ENCODE measurements at regions of chr16 and their contacts with region 1.

Region 1: GRCh38 chr16:75110637-75111513 is 5.7 kb downstream of the LDHD start:
- DNase-seq: peak; percentile 70 to 91 (median 78)
- ATAC-seq: peak; percentile 74
- H3K4me3 ChIP-seq: peak overlapping the region; percentile 20
- H3K4me3 Mint-ChIP-seq: peak overlapping the region; percentile 44
- H3K27ac ChIP-seq: peak overlapping the region in 1 of 2 donors; percentile 62
- H3K27ac Mint-ChIP-seq: peak overlapping the region; percentile 82
- H3K4me1 ChIP-seq: peaks cover 59% of the 10 kb centered on the region
- H3K4me1 Mint-ChIP-seq: peaks cover 55% of the 10 kb centered on the region
- H3K27me3 ChIP-seq: peaks cover 4 to 9% of the 10 kb centered on the region in 2 experiments
- H3K27me3 Mint-ChIP-seq: peaks cover 11% of the 10 kb centered on the region
- CTCF ChIP-seq: peak; percentile 91

Region 2: DNA sequence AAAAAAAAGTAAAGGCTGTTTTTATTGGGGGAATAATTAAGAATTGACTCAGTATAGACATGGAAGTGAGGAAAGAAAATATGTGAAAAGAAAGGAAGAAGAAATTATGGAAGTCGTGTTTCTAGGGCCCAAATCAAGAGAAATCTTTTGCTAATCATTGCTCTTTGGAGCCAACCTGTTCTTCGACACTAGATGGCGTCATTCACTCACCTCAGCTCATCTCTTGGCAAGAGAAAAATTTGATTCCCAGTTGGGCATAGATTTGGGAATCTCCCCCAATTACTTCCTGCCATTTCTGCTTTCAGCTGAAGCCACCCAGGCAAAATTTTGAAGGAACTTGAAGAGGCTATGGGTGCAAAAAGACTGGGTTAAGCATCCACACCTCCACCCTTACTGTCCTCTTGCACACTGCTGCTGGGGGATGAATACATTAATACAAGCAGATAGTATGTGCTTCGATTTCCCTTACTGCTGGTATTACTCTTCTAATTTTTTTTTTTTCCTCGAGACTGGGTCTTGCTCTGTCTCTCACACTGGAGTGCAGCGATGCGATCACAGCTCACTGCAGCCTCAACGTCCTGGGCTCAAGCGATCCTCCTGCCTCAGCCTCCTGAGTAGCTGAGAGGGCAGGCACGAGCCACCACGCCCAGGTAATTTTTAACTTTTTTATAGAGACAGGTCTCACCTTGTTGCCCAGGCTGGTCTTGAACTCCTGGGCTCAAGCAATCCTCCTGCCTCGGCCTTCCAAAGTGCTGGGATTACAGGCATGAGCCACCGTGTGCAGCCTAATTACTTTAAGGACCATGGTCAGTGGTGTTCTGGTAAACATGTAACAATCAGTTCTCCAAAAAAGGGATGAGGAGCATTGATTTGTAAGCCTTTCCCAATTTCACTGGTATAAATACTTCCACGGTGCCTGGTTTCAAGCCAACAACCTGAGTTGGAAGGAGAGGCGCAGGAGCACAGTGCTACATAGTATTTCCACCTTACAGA is 800.8 kb before region 1 on chr16:
- CTCF ChIA-PET with region 1: no interaction called
- POLR2A ChIA-PET with region 1: no interaction called
- intact Hi-C with region 1: no loop called
- DNase-seq: peak in 4 of 14 experiments; percentile 29 to 67 (median 46)
- ATAC-seq: no peak
- H3K4me3 ChIP-seq: no peak overlapping the region
- H3K4me3 Mint-ChIP-seq: no peak overlapping the region
- H3K27ac ChIP-seq: no peak overlapping the region
- H3K27ac Mint-ChIP-seq: no peak overlapping the region
- H3K4me1 ChIP-seq: no peaks in the 10 kb centered on the region
- H3K4me1 Mint-ChIP-seq: no peaks in the 10 kb centered on the region
- H3K27me3 ChIP-seq: no peaks in the 10 kb centered on the region
- H3K27me3 Mint-ChIP-seq: no peaks in the 10 kb centered on the region
- CTCF ChIP-seq: peak; percentile 75

Region 3: DNA sequence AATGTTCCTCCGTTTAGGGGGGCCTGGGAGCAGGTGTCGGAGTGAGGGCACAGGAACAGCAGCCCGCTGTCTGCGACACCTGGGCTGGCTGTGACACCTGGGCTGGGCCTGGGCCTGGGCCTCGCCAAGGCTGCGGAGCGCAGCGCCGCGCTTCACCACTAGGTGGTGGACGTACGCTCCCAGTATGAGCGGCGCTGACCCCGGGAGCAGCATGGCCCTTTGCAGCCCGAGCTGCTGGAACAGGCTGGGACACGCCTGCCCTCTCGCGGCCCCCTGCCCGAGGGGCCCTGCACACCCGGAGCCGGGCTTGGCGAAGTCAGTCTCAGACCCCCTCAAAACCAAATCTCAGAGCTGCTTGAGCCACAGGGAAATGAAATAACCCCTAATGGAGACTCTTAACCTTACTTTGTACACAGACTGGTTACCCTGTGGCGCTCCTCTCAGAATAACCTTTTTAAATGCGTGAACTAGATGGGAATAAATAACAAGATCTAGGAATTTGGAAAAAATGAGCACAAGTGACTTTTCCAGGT is 297.7 kb before region 1 on chr16:
- CTCF ChIA-PET with region 1: interaction called, 5 read pairs
- POLR2A ChIA-PET with region 1: no interaction called
- intact Hi-C with region 1: loop called (anchors 1 to 2 kb)
- DNase-seq: peak; percentile 50 to 84 (median 66)
- ATAC-seq: peak; percentile 99
- H3K4me3 ChIP-seq: no peak overlapping the region
- H3K4me3 Mint-ChIP-seq: no peak overlapping the region
- H3K27ac ChIP-seq: no peak overlapping the region
- H3K27ac Mint-ChIP-seq: no peak overlapping the region
- H3K4me1 ChIP-seq: peaks cover 6% of the 10 kb centered on the region
- H3K4me1 Mint-ChIP-seq: no peaks in the 10 kb centered on the region
- H3K27me3 ChIP-seq: no peaks in the 10 kb centered on the region
- H3K27me3 Mint-ChIP-seq: no peaks in the 10 kb centered on the region
- CTCF ChIP-seq: peak; percentile 96

Region 4: DNA sequence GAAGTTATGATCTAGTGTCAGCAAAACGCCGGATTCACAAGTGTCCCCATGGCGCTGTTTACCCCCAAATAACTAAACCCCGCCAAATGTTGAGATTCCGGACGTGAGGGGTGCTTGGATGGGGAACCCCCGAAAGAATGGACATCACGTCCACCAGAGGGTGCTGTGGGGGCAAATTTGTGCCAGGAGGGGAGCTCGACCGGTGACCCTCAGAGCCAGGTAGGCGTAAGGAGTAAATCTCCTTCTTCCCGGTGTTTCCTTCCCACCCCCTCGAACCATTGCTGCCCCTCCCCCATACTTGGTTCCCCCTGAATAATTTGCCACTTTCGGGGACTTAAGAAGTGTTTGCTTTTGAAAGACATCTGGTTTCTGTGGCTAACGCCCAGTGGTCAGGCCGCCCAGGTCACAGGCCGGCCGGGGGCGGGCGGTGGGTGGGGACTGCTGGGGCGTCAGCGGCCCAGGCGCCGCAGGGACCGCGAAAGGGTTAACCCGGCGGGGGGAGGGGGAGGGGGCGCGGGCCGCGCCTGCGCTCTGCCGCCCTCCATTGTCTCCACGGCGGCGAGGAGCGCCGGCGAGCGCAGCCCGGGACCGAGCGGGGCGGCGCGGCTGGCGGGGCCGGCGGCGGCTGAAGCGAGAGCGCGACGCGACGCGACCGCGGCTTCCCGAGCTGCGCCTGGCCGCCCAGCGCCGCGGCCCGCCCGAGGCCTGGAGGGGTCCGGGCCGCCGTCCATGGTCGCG is 112.2 kb before region 1 on chr16 and contains the start of gene ZNRF1:
- CTCF ChIA-PET with region 1: interaction called, 75 read pairs
- POLR2A ChIA-PET with region 1: interaction called, 54 read pairs
- intact Hi-C with region 1: loop called (anchors 1 kb)
- DNase-seq: peak; percentile 64 to 89 (median 78)
- ATAC-seq: peak; percentile 79
- H3K4me3 ChIP-seq: peak within 1 kb of the TSS; percentile 61
- H3K4me3 Mint-ChIP-seq: peak within 1 kb of the TSS; percentile 94
- H3K27ac ChIP-seq: no peak within 1 kb of the TSS
- H3K27ac Mint-ChIP-seq: peak within 1 kb of the TSS; percentile 82
- H3K4me1 ChIP-seq: peaks cover 25% of the 10 kb centered on the region
- H3K4me1 Mint-ChIP-seq: peaks cover 21% of the 10 kb centered on the region
- H3K27me3 ChIP-seq: no peaks in the 10 kb centered on the region
- H3K27me3 Mint-ChIP-seq: no peaks in the 10 kb centered on the region
- CTCF ChIP-seq: peak; percentile 77
- total RNA-seq, gene ZNRF1: 2.8 to 4.0 TPM

Region 5: DNA sequence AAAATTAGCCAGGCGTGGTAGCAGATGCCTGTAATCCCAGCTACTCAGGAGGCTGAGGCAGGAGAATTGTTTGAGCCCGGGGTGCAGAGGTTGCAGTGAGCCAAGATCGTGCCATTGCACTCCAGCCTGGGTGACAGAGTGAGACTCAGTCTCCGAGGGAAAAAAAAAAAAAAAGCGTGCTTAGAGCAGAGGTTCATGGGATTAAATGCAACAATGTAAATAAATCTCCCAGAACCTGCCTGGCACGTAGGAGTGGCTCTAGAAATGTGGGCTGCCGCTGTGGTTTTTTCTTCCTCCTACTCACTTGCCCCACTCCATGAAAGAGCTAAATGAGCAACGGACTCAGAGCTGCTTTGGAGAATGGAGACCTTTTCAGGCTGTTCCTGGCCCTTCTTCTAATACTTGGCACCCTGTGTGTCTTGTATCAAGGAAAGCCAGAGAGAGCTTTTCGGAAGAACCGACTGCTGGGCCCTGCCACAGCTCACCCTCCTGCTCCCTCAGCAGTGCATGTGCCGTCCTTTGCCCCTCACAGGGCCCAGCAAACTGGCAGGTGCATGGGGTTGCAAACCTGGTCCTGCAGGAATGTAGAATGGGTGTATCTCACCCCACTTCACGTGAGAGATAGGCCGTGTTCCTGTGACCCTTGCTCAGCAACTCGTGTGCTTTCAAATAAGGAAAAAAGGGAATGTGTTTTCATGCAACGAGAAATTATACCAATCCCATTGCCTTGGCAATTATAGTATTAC is 46.3 kb before region 1 on chr16:
- CTCF ChIA-PET with region 1: interaction called, 10 read pairs
- POLR2A ChIA-PET with region 1: interaction called, 4 read pairs
- intact Hi-C with region 1: no loop called
- DNase-seq: peak in 5 of 14 experiments; percentile 6 to 47 (median 41)
- ATAC-seq: peak; percentile 55
- H3K4me3 ChIP-seq: peak overlapping the region; percentile 2
- H3K4me3 Mint-ChIP-seq: peak overlapping the region; percentile 72
- H3K27ac ChIP-seq: no peak overlapping the region
- H3K27ac Mint-ChIP-seq: peak overlapping the region; percentile 84
- H3K4me1 ChIP-seq: peaks cover 35% of the 10 kb centered on the region
- H3K4me1 Mint-ChIP-seq: peaks cover 72% of the 10 kb centered on the region
- H3K27me3 ChIP-seq: no peaks in the 10 kb centered on the region
- H3K27me3 Mint-ChIP-seq: no peaks in the 10 kb centered on the region
- CTCF ChIP-seq: no peak

Region 6: GRCh38 chr16:75099756-75100602 is 10.9 kb before region 1 on chr16:
- CTCF ChIA-PET with region 1: interaction called, 35 read pairs
- POLR2A ChIA-PET with region 1: interaction called, 35 read pairs
- intact Hi-C with region 1: no loop called
- DNase-seq: peak in 10 of 14 experiments; percentile 20 to 77 (median 44)
- ATAC-seq: peak; percentile 30
- H3K4me3 ChIP-seq: no peak overlapping the region
- H3K4me3 Mint-ChIP-seq: peak overlapping the region; percentile 50
- H3K27ac ChIP-seq: peak overlapping the region; percentile 66
- H3K27ac Mint-ChIP-seq: peak overlapping the region; percentile 85
- H3K4me1 ChIP-seq: peaks cover 46% of the 10 kb centered on the region
- H3K4me1 Mint-ChIP-seq: peaks cover 52% of the 10 kb centered on the region
- H3K27me3 ChIP-seq: no peaks in the 10 kb centered on the region
- H3K27me3 Mint-ChIP-seq: no peaks in the 10 kb centered on the region
- CTCF ChIP-seq: no peak